Activated T-helper 2 cell treated with anti-CD3 and anti-CD28 coated beads, Interferon-gamma antibody, Interleukin-2, Interleukin-4, amounts not matched to agents 10 μg/mL and 5 μg/mL and 100 μg/mL, durations not matched to agents 14 hours and 24 hours and 36 hours (primary cell): ENCODE measurements at regions of chr13 and their contacts with region 1.

Region 1: DNA sequence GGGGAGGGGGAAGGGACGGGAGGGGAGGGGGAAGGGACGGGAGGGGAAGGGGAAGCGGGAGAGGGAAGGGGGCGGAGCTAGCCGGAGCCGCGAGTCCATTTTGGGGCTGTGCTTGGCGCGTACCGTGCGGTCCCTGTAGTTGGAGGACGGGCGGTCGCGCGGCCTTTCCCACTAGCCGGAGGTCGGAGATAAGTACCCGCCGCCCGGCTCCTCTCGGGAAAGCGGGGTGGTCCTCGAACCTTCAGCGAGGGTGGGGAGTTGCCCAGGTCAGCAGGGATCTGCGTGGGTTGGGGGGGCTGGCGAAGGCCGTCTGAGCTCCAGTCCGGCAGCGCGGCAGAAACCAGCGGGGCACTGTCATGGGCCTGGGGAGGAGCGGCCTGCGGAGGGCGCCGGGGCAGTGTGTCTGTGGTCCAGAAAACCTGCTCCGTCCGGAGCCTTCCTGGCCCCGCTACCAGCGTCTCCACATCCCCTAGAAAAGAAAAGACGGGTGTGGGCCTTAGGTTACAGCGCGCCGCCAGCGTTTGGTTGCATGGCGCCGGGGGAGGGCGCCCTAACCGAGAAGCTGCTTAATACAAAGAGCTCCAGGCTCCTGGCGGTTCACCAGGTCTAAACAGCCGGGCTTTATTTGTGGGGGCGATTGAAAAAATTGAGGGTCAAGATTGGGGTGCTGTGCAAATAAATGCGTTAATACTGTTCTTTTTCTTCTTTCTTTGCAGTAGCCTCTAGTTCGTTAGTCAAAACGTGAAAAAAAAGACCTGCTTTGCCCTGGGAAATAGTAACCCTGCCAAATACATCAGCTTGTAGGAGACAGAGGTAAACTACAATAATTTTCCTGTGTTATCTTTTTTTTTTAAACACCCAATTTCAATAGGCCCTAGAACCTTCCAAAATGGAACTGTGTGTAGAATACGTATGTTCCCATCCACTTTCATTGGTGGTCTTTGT is at the start of gene TRIM13:
- DNase-seq: peak; percentile 79
- H3K4me3 Mint-ChIP-seq: peak within 1 kb of the TSS; percentile 85
- H3K27ac Mint-ChIP-seq: peak within 1 kb of the TSS; percentile 89
- H3K4me1 Mint-ChIP-seq: peaks cover 31% of the 10 kb centered on the region
- H3K27me3 Mint-ChIP-seq: no peaks in the 10 kb centered on the region
- total RNA-seq, gene TRIM13: 17.2 and 17.9 TPM in 2 replicates

Region 2: DNA sequence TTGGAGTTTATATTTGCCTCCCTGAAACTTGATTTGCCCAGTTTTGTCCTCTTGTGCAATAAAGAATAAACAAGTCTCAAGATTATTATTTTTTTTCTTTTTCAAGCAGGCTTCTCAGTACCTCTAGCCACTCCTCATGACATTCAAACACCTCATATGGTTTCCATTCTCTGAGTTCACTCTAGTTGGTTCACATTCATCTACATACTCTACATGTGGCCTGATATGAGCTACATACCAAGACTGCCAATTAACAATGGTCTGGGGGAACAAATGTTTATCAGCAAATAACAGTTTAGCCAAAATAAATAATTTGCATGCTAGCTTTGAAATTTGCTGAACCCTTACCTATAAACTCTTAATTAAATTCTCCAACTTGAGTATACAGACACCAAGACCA is 40.6 kb after region 1 on chr13:
- intact Hi-C with region 1: loop called (anchors 5 kb)
- DNase-seq: no peak
- H3K4me3 Mint-ChIP-seq: no peak overlapping the region
- H3K27ac Mint-ChIP-seq: no peak overlapping the region
- H3K4me1 Mint-ChIP-seq: peaks cover 3% of the 10 kb centered on the region
- H3K27me3 Mint-ChIP-seq: no peaks in the 10 kb centered on the region

Region 3: DNA sequence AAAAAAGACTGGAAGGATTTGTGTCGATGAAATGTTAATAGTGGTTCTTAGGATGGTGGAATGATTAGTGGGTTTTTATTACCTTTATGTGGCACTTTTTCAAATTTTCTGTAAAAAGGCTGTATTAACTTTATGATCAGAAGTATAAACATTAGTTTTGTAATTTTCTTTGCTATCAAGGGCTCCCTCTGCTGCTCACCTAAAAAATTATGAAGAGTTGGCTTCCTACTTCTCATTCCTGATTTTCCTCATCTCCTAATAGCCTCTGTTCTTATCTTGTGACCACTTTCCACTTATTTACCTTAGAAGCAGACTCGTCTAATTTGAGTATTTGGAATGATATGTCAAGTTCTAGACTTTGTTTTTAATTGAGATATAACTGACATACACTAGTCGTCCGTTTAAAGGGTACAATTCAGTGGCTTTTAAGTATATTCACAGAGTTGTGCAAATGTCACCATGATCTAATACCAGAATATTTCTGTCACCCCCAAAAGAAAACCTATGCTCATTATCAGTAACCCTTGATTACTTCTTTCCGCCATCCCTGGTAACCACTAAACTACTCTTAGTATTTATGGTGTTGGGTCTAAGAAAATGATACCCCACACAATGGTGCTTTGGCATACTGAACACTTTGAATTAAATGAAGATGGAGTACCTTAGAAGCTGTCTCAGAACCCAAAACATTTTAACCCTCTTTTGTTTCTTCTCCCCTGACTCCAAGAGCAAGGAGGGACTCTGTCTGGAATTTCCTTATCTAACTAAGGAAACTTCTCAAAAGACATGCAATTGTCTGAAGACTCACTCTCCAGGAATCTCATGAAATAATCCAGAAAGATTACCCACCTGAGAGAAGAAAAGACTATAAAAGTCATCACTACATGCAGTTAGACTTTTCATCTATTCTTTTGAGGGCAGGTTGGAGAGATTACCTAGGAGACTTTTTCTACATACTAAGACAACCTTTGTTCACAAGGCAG is 535.0 kb after region 1 on chr13:
- intact Hi-C with region 1: loop called (anchors 5 kb)
- DNase-seq: no peak
- H3K4me3 Mint-ChIP-seq: no peak overlapping the region
- H3K27ac Mint-ChIP-seq: no peak overlapping the region
- H3K4me1 Mint-ChIP-seq: peaks cover 20% of the 10 kb centered on the region
- H3K27me3 Mint-ChIP-seq: peaks cover 43% of the 10 kb centered on the region

Region 4: DNA sequence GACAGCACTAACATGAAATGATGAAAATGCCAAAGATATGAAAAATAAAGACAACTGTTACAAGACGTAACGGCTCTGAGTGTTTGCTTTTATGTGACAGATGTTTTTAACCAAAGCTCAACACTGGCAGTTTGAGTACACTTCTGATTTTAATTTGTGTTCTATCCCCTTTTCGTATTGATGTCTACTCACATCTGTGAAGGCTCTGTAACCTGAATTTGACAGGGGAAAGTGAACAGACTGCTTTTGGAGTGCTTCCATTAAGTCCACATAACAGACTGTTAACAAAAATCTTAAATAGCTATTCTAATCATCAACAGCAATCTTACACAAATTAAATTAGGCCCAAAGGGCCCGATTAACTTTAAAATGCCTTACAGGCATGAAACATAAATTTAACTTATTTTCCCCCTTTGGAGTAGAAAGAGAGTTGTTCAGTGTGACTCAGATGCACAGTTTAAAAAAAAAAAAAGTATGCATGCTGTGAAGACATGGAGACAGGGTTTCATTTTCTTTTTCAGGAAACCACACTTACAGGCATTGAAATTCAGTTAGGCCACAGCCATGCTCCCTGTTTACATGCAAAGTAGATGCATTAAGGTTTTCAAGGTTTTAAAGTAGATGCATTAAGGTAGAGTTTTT is 896.1 kb after region 1 on chr13:
- intact Hi-C with region 1: loop called (anchors 5 kb)
- DNase-seq: no peak
- H3K4me3 Mint-ChIP-seq: peak overlapping the region; percentile 51
- H3K27ac Mint-ChIP-seq: peak overlapping the region; percentile 88
- H3K4me1 Mint-ChIP-seq: peaks cover 48% of the 10 kb centered on the region
- H3K27me3 Mint-ChIP-seq: no peaks in the 10 kb centered on the region

Region 5: GRCh38 chr13:51729866-51730546 is 1732.8 kb after region 1 on chr13:
- intact Hi-C with region 1: no loop called
- DNase-seq: peak; percentile 19
- H3K4me3 Mint-ChIP-seq: no peak overlapping the region
- H3K27ac Mint-ChIP-seq: no peak overlapping the region
- H3K4me1 Mint-ChIP-seq: peaks cover 11% of the 10 kb centered on the region
- H3K27me3 Mint-ChIP-seq: no peaks in the 10 kb centered on the region